ENCODE measurements at regions of chr3 and their contacts with region 1.

Region 1: GRCh38 chr3:119206611-119207511 is 33.5 kb downstream of the UPK1B start:
- DNase-seq: no peak
- H3K4me3 ChIP-seq: no peak overlapping the region
- H3K27ac ChIP-seq: no peak overlapping the region
- H3K4me1 ChIP-seq: no peaks in the 10 kb centered on the region
- H3K27me3 ChIP-seq: no peaks in the 10 kb centered on the region
- CTCF ChIP-seq: no peak

Region 2: GRCh38 chr3:119257682-119258410 is 51.0 kb after region 1 on chr3:
- intact Hi-C with region 1: no loop called
- DNase-seq: no peak
- H3K4me3 ChIP-seq: no peak overlapping the region
- H3K27ac ChIP-seq: no peak overlapping the region
- H3K4me1 ChIP-seq: peaks cover 0 to 13% (median 6%) of the 10 kb centered on the region in 4 donors
- H3K27me3 ChIP-seq: no peaks in the 10 kb centered on the region
- CTCF ChIP-seq: no peak

Region 3: DNA sequence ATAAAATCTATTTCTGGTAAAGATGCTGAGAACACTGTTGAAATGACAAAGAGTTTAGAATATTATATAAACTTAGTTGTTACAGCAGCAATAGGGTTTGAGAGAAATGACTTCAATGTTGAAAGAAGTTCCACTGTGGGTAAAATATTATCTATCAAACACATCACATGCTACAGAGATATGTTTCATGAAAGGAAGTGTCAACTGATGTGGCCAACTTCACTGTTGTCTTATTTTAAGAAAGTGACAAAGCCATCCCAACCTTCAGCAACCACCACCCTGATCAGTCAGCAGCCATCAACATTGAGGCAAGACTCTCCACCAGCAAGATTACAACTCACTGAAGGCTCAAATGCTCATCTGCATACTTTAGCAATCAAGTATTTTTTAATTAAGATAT is 236.3 kb after region 1 on chr3:
- intact Hi-C with region 1: loop called (anchors 5 kb)
- DNase-seq: no peak
- H3K4me3 ChIP-seq: no peak overlapping the region
- H3K27ac ChIP-seq: no peak overlapping the region
- H3K4me1 ChIP-seq: no peaks in the 10 kb centered on the region
- H3K27me3 ChIP-seq: no peaks in the 10 kb centered on the region
- CTCF ChIP-seq: no peak

Measured in tibial artery (tissue), 4 donors.